ENCODE measurements at regions of chr19 and their contacts with region 1.

Region 1: DNA sequence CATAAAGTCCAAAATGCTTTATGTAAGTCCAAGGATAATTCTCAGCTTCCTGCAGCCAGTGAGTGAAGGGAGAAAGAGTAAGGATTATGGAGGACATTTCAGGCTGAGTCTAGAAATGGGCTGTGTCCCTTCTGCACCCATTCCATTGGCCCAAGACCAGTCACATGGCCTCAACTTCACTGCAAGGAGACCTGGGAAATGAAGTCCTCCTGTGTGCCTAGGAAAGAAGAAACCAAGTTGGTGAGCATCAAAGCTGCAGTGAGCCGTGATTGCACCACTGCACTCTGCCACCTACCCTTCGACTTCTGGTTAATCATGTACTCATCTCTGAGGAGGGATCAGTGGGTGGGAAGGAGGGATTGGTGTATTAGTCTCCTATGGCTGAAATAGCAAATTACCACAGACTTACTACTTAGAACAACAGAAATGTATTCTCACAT is 3.6 kb upstream of the CD37 start:
- DNase-seq: peak; percentile 71
- H3K4me3 Mint-ChIP-seq: no peak overlapping the region
- H3K27ac Mint-ChIP-seq: peak overlapping the region; percentile 44
- H3K4me1 Mint-ChIP-seq: peaks cover 71% of the 10 kb centered on the region
- H3K27me3 Mint-ChIP-seq: no peaks in the 10 kb centered on the region

Region 2: GRCh38 chr19:49224856-49225255 is 106.8 kb before region 1 on chr19:
- CTCF ChIA-PET with region 1: interaction called, 12 read pairs
- POLR2A ChIA-PET with region 1: no interaction called
- DNase-seq: peak; percentile 55
- H3K4me3 Mint-ChIP-seq: no peak overlapping the region
- H3K27ac Mint-ChIP-seq: no peak overlapping the region
- H3K4me1 Mint-ChIP-seq: peaks cover 6% of the 10 kb centered on the region
- H3K27me3 Mint-ChIP-seq: peaks cover 5% of the 10 kb centered on the region

Region 3: GRCh38 chr19:49272184-49272583 is 59.5 kb before region 1 on chr19:
- CTCF ChIA-PET with region 1: no interaction called
- POLR2A ChIA-PET with region 1: no interaction called
- DNase-seq: no peak
- H3K4me3 Mint-ChIP-seq: no peak overlapping the region
- H3K27ac Mint-ChIP-seq: no peak overlapping the region
- H3K4me1 Mint-ChIP-seq: no peaks in the 10 kb centered on the region
- H3K27me3 Mint-ChIP-seq: peaks cover 18% of the 10 kb centered on the region

Region 4: DNA sequence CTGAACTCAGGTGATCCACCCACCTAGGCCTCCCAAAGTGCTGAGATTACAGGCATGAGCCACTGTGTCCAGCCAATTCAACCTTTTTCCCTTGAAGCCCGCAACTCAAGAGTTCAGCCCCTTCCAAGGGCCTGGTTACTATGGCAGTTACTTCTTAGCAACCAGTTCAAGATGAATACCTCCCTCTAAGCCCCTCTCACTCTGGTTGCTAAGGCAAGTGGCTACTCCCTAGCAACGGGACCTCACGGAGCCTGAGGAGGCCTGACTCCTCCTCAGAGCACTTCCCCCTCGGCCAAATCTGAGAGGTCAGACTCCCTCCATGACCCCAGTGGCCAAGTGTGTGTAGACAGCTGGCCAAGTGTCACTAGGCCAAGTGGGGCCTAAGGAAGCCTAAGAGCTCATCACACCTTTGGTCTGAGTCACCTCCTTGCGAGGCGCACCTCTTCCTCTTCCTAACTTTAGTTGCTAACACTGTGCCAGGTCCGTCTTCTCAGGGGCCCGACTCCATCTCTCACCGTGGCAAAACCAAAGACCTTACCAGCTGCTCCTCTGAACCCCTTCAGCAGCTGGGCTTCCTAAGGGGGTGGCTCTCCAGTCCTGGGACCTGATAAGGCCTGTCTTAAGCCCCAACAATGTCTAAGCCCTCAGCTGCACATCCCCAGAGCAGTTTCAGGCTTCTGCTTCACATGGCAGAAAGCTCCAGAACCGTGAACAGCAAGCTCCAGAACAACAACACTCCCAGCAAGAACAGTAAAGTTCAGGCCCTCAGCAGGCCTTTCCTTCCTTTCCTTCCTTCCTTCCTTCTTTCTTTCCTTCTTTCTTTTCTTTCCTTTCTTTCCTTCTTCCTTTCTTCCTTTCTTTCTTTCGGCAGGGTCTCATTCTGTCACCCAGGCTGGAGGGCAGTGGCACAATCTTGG is 13.1 kb after region 1 on chr19:
- CTCF ChIA-PET with region 1: no interaction called
- POLR2A ChIA-PET with region 1: interaction called, 15 read pairs
- DNase-seq: no peak
- H3K4me3 Mint-ChIP-seq: no peak overlapping the region
- H3K27ac Mint-ChIP-seq: peak overlapping the region; percentile 23
- H3K4me1 Mint-ChIP-seq: peaks cover 17% of the 10 kb centered on the region
- H3K27me3 Mint-ChIP-seq: no peaks in the 10 kb centered on the region